CD4-positive, alpha-beta memory T cell (primary cell): ENCODE measurements at regions of chr17 and their contacts with region 1.

Region 1: GRCh38 chr17:67376737-67377487 is at the start of gene PITPNC1:
- DNase-seq: peak; percentile 86 to 91 (median 87)
- H3K4me3 ChIP-seq: peak within 1 kb of the TSS; percentile 81 to 83
- H3K4me3 Mint-ChIP-seq: peak within 1 kb of the TSS; percentile 89 to 98 (median 92)
- H3K27ac ChIP-seq: peak within 1 kb of the TSS; percentile 78
- H3K27ac Mint-ChIP-seq: peak within 1 kb of the TSS; percentile 86 to 94 (median 92)
- H3K4me1 ChIP-seq: peaks cover 50% of the 10 kb centered on the region
- H3K4me1 Mint-ChIP-seq: peaks cover 29 to 51% (median 36%) of the 10 kb centered on the region in 4 donors
- H3K27me3 ChIP-seq: no peaks in the 10 kb centered on the region
- H3K27me3 Mint-ChIP-seq: no peaks in the 10 kb centered on the region
- total RNA-seq, gene PITPNC1: 68.4 to 71.2 TPM

Region 2: DNA sequence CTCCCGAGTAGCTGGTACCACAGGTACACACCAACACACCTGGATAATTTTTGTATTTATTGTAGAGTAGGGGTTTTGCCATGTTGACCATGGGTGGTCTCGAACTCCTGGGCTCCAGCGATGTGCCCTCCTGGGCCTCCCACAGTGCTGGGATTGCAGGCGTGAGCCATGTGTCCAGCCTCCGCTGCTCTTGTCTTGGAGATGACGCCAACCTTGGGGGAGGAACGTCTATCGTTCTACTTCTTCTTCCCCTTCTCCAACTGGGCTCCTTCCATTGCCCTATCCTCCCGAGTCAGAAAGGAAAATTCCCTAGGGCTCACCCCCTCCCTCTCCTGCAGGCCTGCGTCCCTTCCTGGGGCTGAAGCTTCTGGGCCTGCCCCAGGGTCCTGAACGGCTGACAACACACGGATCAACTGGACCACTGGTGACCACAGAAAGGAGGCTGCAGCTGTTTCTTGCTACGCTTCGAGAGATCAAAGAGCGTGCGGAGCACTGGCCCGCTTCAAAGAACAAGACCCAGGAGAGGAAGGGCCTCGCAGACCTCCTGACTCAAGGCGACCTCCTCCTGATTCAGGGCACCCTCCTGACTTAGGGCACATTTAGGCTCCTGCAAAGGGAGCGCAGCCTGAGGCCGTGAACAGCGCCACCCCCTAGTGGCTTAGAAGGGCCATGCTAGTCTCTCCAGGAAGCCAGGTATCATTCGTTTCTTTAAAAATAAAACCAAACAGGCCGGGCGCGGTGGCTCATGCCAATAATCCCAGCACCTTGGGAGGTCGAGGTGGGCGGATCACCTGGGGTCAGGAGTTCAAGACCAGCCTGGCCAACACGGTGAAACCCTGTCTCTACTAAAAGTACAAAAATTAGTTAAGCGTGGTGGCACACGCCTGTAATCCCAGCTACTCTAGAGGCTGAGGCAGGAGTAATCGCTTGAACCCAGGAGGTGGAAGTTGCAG is 83.4 kb before region 1 on chr17:
- CTCF ChIA-PET with region 1: no interaction called
- POLR2A ChIA-PET with region 1: no interaction called
- intact Hi-C with region 1: no loop called
- DNase-seq: peak; percentile 61 to 70 (median 69)
- H3K4me3 ChIP-seq: no peak overlapping the region
- H3K4me3 Mint-ChIP-seq: peak overlapping the region in 6 of 8 donors; percentile 32 to 69 (median 52)
- H3K27ac ChIP-seq: no peak overlapping the region
- H3K27ac Mint-ChIP-seq: peak overlapping the region in 5 of 7 donors; percentile 23 to 47 (median 36)
- H3K4me1 ChIP-seq: no peaks in the 10 kb centered on the region
- H3K4me1 Mint-ChIP-seq: peaks cover 0 to 7% (median 5%) of the 10 kb centered on the region in 4 donors
- H3K27me3 ChIP-seq: no peaks in the 10 kb centered on the region
- H3K27me3 Mint-ChIP-seq: no peaks in the 10 kb centered on the region

Region 3: DNA sequence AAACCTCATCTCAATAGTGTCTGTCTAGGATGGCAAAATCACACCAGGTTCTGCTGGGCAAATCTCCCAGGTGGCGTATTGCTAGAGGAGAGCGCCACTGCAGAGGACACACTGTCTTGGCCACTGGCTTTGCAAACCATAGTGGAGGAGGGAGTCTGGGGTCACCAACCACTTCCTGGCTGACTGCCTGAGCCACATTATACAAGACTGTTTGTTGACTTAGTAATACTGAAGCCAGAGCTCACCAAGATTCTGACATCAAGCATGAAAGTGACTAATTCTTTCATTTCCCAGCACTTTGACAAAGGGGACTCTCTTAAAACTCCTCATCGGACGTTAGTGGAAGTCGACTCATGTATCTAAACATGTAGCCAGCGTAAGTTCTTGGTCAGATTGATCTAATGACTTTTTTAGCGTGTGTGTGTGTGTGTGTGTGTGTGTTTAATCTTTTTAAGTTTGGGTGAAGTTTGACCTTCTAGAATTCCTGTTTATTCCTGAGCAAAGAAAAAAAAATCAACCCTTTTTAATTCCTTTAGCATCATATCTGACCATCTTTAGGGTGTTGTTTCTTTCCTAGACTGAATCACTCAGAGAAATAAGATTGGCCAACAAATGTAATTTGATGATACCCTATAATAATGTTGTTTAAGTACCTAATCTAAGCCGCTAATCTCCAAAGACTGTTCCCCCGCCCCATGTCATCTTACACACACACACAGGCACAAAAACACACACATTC is 13.9 kb after region 1 on chr17:
- CTCF ChIA-PET with region 1: interaction called, 46 read pairs
- POLR2A ChIA-PET with region 1: interaction called, 69 read pairs
- intact Hi-C with region 1: loop called (anchors 1 kb)
- DNase-seq: peak; percentile 47 to 82 (median 61)
- H3K4me3 ChIP-seq: peak overlapping the region in 1 of 2 donors; percentile 6
- H3K4me3 Mint-ChIP-seq: peak overlapping the region; percentile 69 to 96 (median 85)
- H3K27ac ChIP-seq: peak overlapping the region; percentile 53
- H3K27ac Mint-ChIP-seq: peak overlapping the region; percentile 92 to 97 (median 96)
- H3K4me1 ChIP-seq: peaks cover 76% of the 10 kb centered on the region
- H3K4me1 Mint-ChIP-seq: peaks cover 46 to 82% (median 64%) of the 10 kb centered on the region in 4 donors
- H3K27me3 ChIP-seq: no peaks in the 10 kb centered on the region
- H3K27me3 Mint-ChIP-seq: no peaks in the 10 kb centered on the region

Region 4: GRCh38 chr17:67431249-67432048 is 54.5 kb after region 1 on chr17:
- CTCF ChIA-PET with region 1: interaction called, 36 read pairs
- POLR2A ChIA-PET with region 1: interaction called, 82 read pairs
- intact Hi-C with region 1: no loop called
- DNase-seq: peak in 1 of 5 donors; percentile 19
- H3K4me3 ChIP-seq: no peak overlapping the region
- H3K4me3 Mint-ChIP-seq: peak overlapping the region in 6 of 8 donors; percentile 7 to 58 (median 42)
- H3K27ac ChIP-seq: no peak overlapping the region
- H3K27ac Mint-ChIP-seq: peak overlapping the region; percentile 56 to 99 (median 77)
- H3K4me1 ChIP-seq: peaks cover 64% of the 10 kb centered on the region
- H3K4me1 Mint-ChIP-seq: peaks cover 43 to 82% (median 57%) of the 10 kb centered on the region in 4 donors
- H3K27me3 ChIP-seq: no peaks in the 10 kb centered on the region
- H3K27me3 Mint-ChIP-seq: no peaks in the 10 kb centered on the region

Region 5: GRCh38 chr17:67459870-67460455 is 83.1 kb after region 1 on chr17:
- CTCF ChIA-PET with region 1: interaction called, 20 read pairs
- POLR2A ChIA-PET with region 1: interaction called, 73 read pairs
- intact Hi-C with region 1: no loop called
- DNase-seq: no peak
- H3K4me3 ChIP-seq: no peak overlapping the region
- H3K4me3 Mint-ChIP-seq: no peak overlapping the region
- H3K27ac ChIP-seq: no peak overlapping the region
- H3K27ac Mint-ChIP-seq: peak overlapping the region in 4 of 7 donors; percentile 12 to 76 (median 65)
- H3K4me1 ChIP-seq: peaks cover 56% of the 10 kb centered on the region
- H3K4me1 Mint-ChIP-seq: peaks cover 43 to 90% (median 69%) of the 10 kb centered on the region in 4 donors
- H3K27me3 ChIP-seq: no peaks in the 10 kb centered on the region
- H3K27me3 Mint-ChIP-seq: no peaks in the 10 kb centered on the region

Region 6: GRCh38 chr17:67481808-67482207 is 104.9 kb after region 1 on chr17:
- CTCF ChIA-PET with region 1: interaction called, 605 read pairs
- POLR2A ChIA-PET with region 1: interaction called, 258 read pairs
- intact Hi-C with region 1: no loop called
- DNase-seq: no peak
- H3K4me3 ChIP-seq: no peak overlapping the region
- H3K4me3 Mint-ChIP-seq: peak overlapping the region in 1 of 8 donors; percentile 7
- H3K27ac ChIP-seq: no peak overlapping the region
- H3K27ac Mint-ChIP-seq: peak overlapping the region in 5 of 7 donors; percentile 19 to 66 (median 41)
- H3K4me1 ChIP-seq: peaks cover 43% of the 10 kb centered on the region
- H3K4me1 Mint-ChIP-seq: peaks cover 46 to 80% (median 61%) of the 10 kb centered on the region in 4 donors
- H3K27me3 ChIP-seq: no peaks in the 10 kb centered on the region
- H3K27me3 Mint-ChIP-seq: no peaks in the 10 kb centered on the region

Region 7: GRCh38 chr17:67689534-67690177 is 312.7 kb after region 1 on chr17:
- CTCF ChIA-PET with region 1: interaction called, 150 read pairs
- POLR2A ChIA-PET with region 1: interaction called, 5 read pairs
- intact Hi-C with region 1: loop called (anchors 1 kb)
- DNase-seq: peak; percentile 57 to 63 (median 62)
- H3K4me3 ChIP-seq: no peak overlapping the region
- H3K4me3 Mint-ChIP-seq: no peak overlapping the region
- H3K27ac ChIP-seq: no peak overlapping the region
- H3K27ac Mint-ChIP-seq: peak overlapping the region in 2 of 7 donors; percentile 47 to 54
- H3K4me1 ChIP-seq: no peaks in the 10 kb centered on the region
- H3K4me1 Mint-ChIP-seq: peaks cover 0 to 4% (median 3%) of the 10 kb centered on the region in 4 donors
- H3K27me3 ChIP-seq: no peaks in the 10 kb centered on the region
- H3K27me3 Mint-ChIP-seq: no peaks in the 10 kb centered on the region